Cardiac septum (tissue), 1 donor: ENCODE measurements at regions of chr12 and their contacts with region 1.

Region 1: DNA sequence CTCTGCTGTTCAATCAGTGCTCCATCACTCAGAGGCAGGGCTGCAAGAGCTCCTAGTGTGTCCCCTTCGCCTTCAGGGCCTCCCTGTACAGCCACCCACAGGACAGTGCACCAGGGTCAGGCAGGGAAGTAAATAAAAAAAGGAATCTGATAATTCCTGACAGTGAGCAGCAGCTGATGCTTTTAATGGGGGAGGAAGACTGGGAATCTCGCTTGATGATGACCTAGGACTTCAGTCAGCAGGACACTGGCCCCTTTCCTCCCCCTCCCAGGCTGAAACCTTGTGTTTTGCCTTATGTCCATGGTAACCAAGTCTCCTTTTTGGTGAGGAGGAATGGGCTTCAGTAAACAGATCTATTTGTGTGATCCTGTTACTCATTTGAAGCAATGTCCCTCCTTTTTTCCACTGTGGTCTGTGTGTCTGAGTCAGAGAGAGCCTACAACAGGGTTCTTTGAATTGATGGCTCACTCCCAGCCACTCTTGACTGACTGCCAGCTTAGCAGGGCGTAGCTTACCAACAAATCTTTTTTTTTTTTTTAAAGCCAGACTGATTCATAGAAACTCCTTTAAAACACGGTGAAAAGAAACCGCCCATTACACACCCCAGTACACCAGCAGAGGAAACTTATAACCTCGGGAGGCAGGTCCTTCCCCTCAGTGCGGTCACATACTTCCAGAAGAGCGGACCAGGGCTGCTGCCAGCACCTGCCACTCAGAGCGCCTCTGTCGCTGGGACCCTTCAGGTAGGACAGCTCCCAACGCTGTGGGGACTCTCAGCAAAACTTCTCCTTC is at the start of gene EMP1:
- DNase-seq: peak; percentile 90
- total RNA-seq, gene EMP1: 118 TPM

Region 2: DNA sequence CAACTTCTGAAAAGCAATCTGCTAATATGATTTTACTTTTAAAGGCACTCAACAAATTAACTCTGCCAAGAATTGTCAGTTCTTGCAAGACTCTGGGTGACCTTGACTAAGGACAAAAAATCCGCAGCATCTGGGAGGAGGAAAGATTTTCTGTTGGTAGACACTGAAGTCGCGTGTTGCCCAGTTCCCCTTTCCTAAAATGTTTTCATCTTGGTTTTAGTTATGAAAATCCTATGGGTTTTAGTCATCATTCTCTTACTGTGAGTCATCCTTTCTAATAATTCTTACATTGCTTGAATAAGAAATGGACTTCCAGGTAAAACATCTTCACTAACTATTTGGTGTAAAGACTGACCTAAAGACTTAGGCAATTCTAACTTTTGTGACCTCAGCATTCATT is 102.0 kb before region 1 on chr12:
- intact Hi-C with region 1: loop called (anchors 1 kb)
- DNase-seq: no peak

Region 3: GRCh38 chr12:13173012-13173932 is 23.1 kb before region 1 on chr12:
- intact Hi-C with region 1: loop called (anchors 1 kb)
- DNase-seq: peak; percentile 77

Region 4: GRCh38 chr12:13278249-13278787 is 82.0 kb after region 1 on chr12:
- intact Hi-C with region 1: no loop called
- DNase-seq: peak; percentile 87

Region 5: GRCh38 chr12:13474381-13474780 is 278.1 kb after region 1 on chr12:
- intact Hi-C with region 1: no loop called
- DNase-seq: no peak